ENCODE measurements at regions of chr6 and their contacts with region 1.

Region 1: GRCh38 chr6:108581237-108581931 is 20.7 kb downstream of the FOXO3 start:
- DNase-seq: peak; percentile 84
- ATAC-seq: peak; percentile 56
- H3K4me3 ChIP-seq: peak overlapping the region; percentile 2; the same call in 1 of the 2 replicates
- H3K27ac ChIP-seq: peak overlapping the region; percentile 6; the same call in 1 of the 2 replicates
- H3K4me1 ChIP-seq: peaks cover 45% of the 10 kb centered on the region
- H3K27me3 ChIP-seq: no peaks in the 10 kb centered on the region
- CTCF ChIP-seq: no peak
- POLR2A ChIP-seq: no peak
- RAD21 ChIP-seq: no peak

Region 2: DNA sequence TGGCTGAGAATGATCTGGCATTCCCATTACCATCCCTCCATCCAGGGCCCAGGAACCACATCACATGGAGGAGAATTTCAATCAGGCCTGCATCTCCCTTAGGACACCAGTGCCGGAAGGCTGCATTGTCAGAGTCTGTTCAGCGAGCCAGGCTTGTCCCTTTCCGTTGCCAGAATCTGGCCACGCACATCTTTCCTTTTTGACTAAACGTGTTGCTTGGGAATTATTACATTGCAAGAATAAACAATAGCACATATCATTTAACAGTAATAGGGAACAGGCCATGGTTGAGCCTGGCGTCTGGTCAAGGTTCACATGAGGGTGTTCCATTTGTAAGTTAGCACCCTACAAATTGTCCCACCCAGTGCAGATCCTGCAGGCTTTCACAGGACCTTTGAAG is 1048.7 kb before region 1 on chr6:
- CTCF ChIA-PET with region 1: no interaction called
- POLR2A ChIA-PET with region 1: no interaction called
- dilution Hi-C with region 1: no loop called
- in situ Hi-C with region 1: no loop called
- intact Hi-C with region 1: no loop called
- DNase-seq: no peak
- ATAC-seq: no peak
- H3K4me3 ChIP-seq: no peak overlapping the region
- H3K27ac ChIP-seq: no peak overlapping the region
- H3K4me1 ChIP-seq: no peaks in the 10 kb centered on the region
- H3K27me3 ChIP-seq: no peaks in the 10 kb centered on the region
- CTCF ChIP-seq: no peak
- POLR2A ChIP-seq: no peak
- RAD21 ChIP-seq: no peak

Region 3: GRCh38 chr6:108541838-108542759 is 39.3 kb before region 1 on chr6:
- CTCF ChIA-PET with region 1: no interaction called
- POLR2A ChIA-PET with region 1: no interaction called
- dilution Hi-C with region 1: no loop called
- in situ Hi-C with region 1: no loop called
- intact Hi-C with region 1: no loop called
- DNase-seq: peak; percentile 87
- ATAC-seq: peak; percentile 86
- H3K4me3 ChIP-seq: no peak overlapping the region
- H3K27ac ChIP-seq: no peak overlapping the region
- H3K4me1 ChIP-seq: peaks cover 10% of the 10 kb centered on the region
- H3K27me3 ChIP-seq: no peaks in the 10 kb centered on the region
- CTCF ChIP-seq: peak; percentile 91
- POLR2A ChIP-seq: peak; percentile 47; the same call in 1 of the 2 replicates
- RAD21 ChIP-seq: peak; percentile 100

Region 4: DNA sequence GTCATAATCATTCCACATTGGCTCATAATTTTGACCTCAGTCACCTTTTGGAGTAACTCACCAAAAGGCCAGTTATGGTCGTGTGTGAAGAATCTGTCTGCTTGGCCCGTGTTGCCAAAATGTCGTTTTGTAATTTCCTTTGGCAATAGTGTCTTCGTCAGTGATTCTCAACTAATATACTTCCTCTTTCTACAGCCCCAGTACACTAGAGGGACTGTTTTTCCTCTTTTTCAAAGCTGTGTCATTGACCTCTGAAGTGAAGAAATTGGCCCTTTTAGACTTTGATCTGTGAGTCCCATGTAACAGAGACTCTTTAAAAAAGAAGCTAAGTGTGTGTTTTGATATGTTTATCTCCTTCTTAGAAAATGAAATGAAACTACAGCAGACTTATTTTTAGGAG is 15.5 kb before region 1 on chr6:
- CTCF ChIA-PET with region 1: interaction called, 3 read pairs
- POLR2A ChIA-PET with region 1: no interaction called
- dilution Hi-C with region 1: no loop called
- in situ Hi-C with region 1: no loop called
- intact Hi-C with region 1: loop called (anchors 2 kb)
- DNase-seq: peak; percentile 88
- ATAC-seq: 0 out of 2 replicates have a peak, but pooled peaks have one; percentile 2
- H3K4me3 ChIP-seq: no peak overlapping the region
- H3K27ac ChIP-seq: peak overlapping the region; percentile 21; the same call in 1 of the 2 replicates
- H3K4me1 ChIP-seq: peaks cover 14% of the 10 kb centered on the region
- H3K27me3 ChIP-seq: no peaks in the 10 kb centered on the region
- CTCF ChIP-seq: peak; percentile 33; the same call in 1 of the 2 replicates
- POLR2A ChIP-seq: no peak
- RAD21 ChIP-seq: peak; percentile 39

Region 5: GRCh38 chr6:108621117-108621516 is 39.7 kb after region 1 on chr6:
- CTCF ChIA-PET with region 1: no interaction called
- POLR2A ChIA-PET with region 1: no interaction called
- dilution Hi-C with region 1: no loop called
- in situ Hi-C with region 1: no loop called
- intact Hi-C with region 1: loop called (anchors 1 kb)
- DNase-seq: peak; percentile 90
- ATAC-seq: peak; percentile 51
- H3K4me3 ChIP-seq: no peak overlapping the region
- H3K27ac ChIP-seq: no peak overlapping the region
- H3K4me1 ChIP-seq: peaks cover 21% of the 10 kb centered on the region
- H3K27me3 ChIP-seq: no peaks in the 10 kb centered on the region
- CTCF ChIP-seq: peak; percentile 25; the same call in 1 of the 2 replicates
- POLR2A ChIP-seq: no peak
- RAD21 ChIP-seq: peak; percentile 37; the same call in 1 of the 2 replicates

Region 6: DNA sequence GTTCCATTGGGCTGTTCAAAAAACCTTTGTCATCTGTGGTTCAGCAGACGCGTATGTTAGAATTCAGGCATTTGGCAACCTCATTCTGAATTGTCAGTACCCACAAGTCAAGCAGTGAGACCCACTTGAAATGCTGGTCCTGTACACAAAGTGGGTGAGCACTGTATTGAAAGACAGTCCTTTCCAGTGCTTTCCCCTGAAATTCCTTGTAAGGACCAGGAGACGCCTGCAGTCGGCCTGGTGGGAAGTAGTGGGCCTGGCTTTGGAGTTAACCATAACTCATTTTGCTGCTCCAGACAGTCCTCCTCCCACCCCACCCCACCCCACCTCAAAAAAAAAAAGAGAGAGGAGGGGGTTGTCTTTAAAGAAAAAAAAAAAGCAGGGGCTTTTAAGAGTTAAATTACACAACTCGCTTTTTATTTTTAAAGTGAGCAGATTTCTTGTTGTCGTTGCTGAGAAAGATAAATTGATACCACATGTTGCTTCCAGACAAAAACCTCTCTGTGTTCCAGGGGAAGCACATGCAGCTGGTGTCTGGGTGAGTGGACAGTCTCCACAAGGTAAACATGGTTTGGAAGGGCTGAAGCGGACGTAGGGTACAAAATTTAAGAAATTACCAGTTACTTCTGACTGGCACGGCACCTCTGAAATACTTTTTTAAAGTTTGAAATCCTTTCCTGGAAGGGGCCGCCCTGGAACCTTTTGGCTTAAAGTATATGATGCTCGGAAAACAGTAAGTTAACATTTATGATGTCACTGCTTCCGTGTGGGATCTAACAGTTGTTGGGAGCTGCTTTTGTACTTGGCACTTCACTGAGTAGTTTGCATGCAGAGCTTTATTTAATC is 74.6 kb after region 1 on chr6:
- CTCF ChIA-PET with region 1: no interaction called
- POLR2A ChIA-PET with region 1: interaction called, 3 read pairs
- dilution Hi-C with region 1: no loop called
- in situ Hi-C with region 1: no loop called
- intact Hi-C with region 1: loop called (anchors 2 kb)
- DNase-seq: peak; percentile 90
- ATAC-seq: peak; percentile 21
- H3K4me3 ChIP-seq: no peak overlapping the region
- H3K27ac ChIP-seq: peak overlapping the region; percentile 51; the same call in 1 of the 2 replicates
- H3K4me1 ChIP-seq: peaks cover 33% of the 10 kb centered on the region
- H3K27me3 ChIP-seq: no peaks in the 10 kb centered on the region
- CTCF ChIP-seq: no peak
- POLR2A ChIP-seq: no peak
- RAD21 ChIP-seq: no peak

Region 7: DNA sequence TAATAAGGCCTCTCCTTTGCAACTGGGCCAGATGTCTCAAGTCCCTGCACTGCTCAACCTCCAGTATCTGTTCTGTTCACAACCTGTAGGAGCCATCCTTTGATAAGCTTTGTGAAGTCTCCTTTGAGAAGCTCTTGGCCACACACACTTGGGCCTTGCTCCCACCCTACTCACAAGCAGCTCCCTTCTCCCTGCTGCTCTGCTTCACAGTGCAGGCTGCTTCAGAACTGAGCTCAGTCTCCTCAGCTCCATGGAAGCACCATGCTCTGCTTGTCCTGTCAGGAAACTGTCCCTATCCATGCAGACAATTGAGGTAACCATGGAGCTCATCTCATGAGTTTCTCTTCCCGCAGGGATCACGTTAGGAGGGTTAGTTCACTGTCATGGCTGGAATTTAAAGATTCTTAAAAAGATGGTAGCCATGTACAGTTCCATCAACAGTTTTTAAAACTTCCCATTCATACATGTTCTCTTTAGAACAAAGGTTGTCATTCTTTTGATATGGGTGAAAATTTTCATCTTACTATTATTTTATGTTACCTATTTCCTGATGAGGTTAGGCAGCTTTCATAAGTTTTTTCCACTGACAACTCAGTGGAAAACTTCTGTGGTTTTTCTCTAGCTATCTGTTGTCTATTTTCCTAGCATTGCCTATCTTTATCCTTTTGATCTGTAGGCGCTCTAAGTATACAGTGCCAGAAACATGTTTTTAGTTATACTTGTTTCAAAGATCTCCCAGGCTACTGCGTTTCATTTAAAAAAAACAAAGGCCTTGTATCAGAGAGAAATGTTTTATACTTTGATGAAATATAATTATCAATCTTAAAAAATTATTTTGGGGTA is 1047.0 kb after region 1 on chr6:
- CTCF ChIA-PET with region 1: no interaction called
- POLR2A ChIA-PET with region 1: no interaction called
- dilution Hi-C with region 1: no loop called
- in situ Hi-C with region 1: no loop called
- intact Hi-C with region 1: no loop called
- DNase-seq: no peak
- ATAC-seq: no peak
- H3K4me3 ChIP-seq: no peak overlapping the region
- H3K27ac ChIP-seq: no peak overlapping the region
- H3K4me1 ChIP-seq: no peaks in the 10 kb centered on the region
- H3K27me3 ChIP-seq: no peaks in the 10 kb centered on the region
- CTCF ChIP-seq: no peak
- POLR2A ChIP-seq: no peak
- RAD21 ChIP-seq: no peak

Region 8: GRCh38 chr6:109760208-109760607 is 1178.8 kb after region 1 on chr6:
- CTCF ChIA-PET with region 1: no interaction called
- POLR2A ChIA-PET with region 1: no interaction called
- dilution Hi-C with region 1: no loop called
- in situ Hi-C with region 1: no loop called
- intact Hi-C with region 1: no loop called
- DNase-seq: peak; percentile 33
- ATAC-seq: no peak
- H3K4me3 ChIP-seq: no peak overlapping the region
- H3K27ac ChIP-seq: no peak overlapping the region
- H3K4me1 ChIP-seq: peaks cover 2% of the 10 kb centered on the region
- H3K27me3 ChIP-seq: no peaks in the 10 kb centered on the region
- CTCF ChIP-seq: no peak
- POLR2A ChIP-seq: no peak
- RAD21 ChIP-seq: no peak